CD4-positive, alpha-beta T cell (primary cell): ENCODE measurements at regions of chr4 and their contacts with region 1.

Region 1: GRCh38 chr4:153521999-153522801 is 56.0 kb downstream of the TMEM131L start:
- DNase-seq: peak in 13 of 14 experiments; percentile 33 to 85 (median 55)
- ATAC-seq: peak; percentile 56
- H3K4me3 ChIP-seq: peak overlapping the region; percentile 28
- H3K4me3 Mint-ChIP-seq: peak overlapping the region; percentile 85
- H3K27ac ChIP-seq: peak overlapping the region; percentile 66 to 81
- H3K27ac Mint-ChIP-seq: peak overlapping the region; percentile 91
- H3K4me1 ChIP-seq: peaks cover 93% of the 10 kb centered on the region
- H3K4me1 Mint-ChIP-seq: peaks cover 94% of the 10 kb centered on the region
- H3K27me3 ChIP-seq: no peaks in the 10 kb centered on the region
- H3K27me3 Mint-ChIP-seq: no peaks in the 10 kb centered on the region
- CTCF ChIP-seq: no peak

Region 2: DNA sequence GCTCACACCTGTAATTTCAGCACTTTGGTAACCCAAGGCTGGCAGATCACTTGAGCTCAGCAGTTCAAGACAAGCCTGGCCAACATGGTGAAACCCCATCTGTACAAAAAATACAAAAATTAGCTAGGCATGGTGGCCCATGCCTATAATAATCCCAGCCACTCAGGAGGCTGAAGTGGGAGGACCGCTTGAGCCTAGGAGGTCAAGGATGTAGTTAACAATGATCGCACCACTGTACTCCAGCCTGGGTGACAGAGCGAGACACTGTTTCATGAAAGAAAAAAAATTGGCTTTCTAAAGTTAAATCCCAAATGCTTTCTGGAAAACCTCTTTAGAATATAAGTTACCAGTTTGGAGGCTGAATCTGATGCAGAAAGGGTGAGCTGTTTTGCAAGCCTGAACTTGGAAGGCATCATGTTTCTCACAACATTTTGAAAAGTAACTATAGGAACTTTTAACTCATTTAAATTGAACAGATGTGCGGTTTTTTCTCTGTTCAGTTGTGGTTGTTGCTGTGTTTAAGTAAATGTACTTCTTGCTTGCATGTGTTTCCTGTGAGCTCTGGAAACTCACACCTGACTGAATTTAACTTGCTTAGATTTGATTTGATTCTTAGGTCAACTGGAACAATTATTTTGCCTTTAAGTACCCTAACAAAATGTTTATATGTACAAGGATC is 95.9 kb before region 1 on chr4:
- CTCF ChIA-PET with region 1: no interaction called
- POLR2A ChIA-PET with region 1: interaction called, 4 read pairs
- intact Hi-C with region 1: loop called in 1 of 2 experiments (anchors 5 kb)
- DNase-seq: peak in 5 of 14 experiments; percentile 10 to 74 (median 68)
- ATAC-seq: peak; percentile 73
- H3K4me3 ChIP-seq: no peak overlapping the region
- H3K4me3 Mint-ChIP-seq: peak overlapping the region; percentile 50
- H3K27ac ChIP-seq: peak overlapping the region; percentile 58 to 61
- H3K27ac Mint-ChIP-seq: peak overlapping the region; percentile 96
- H3K4me1 ChIP-seq: peaks cover 44% of the 10 kb centered on the region
- H3K4me1 Mint-ChIP-seq: peaks cover 57% of the 10 kb centered on the region
- H3K27me3 ChIP-seq: no peaks in the 10 kb centered on the region
- H3K27me3 Mint-ChIP-seq: no peaks in the 10 kb centered on the region
- CTCF ChIP-seq: no peak

Region 3: GRCh38 chr4:153488006-153488891 is 34.0 kb before region 1 on chr4:
- CTCF ChIA-PET with region 1: interaction called, 4 read pairs
- POLR2A ChIA-PET with region 1: interaction called, 12 read pairs
- intact Hi-C with region 1: loop called (anchors 5 kb)
- DNase-seq: peak in 13 of 14 experiments; percentile 50 to 94 (median 67)
- ATAC-seq: peak; percentile 65
- H3K4me3 ChIP-seq: peak overlapping the region; percentile 57
- H3K4me3 Mint-ChIP-seq: peak overlapping the region; percentile 88
- H3K27ac ChIP-seq: peak overlapping the region; percentile 92 to 94
- H3K27ac Mint-ChIP-seq: peak overlapping the region; percentile 92
- H3K4me1 ChIP-seq: peaks cover 68% of the 10 kb centered on the region
- H3K4me1 Mint-ChIP-seq: peaks cover 82% of the 10 kb centered on the region
- H3K27me3 ChIP-seq: no peaks in the 10 kb centered on the region
- H3K27me3 Mint-ChIP-seq: no peaks in the 10 kb centered on the region
- CTCF ChIP-seq: no peak

Region 4: GRCh38 chr4:153535772-153536513 is 13.7 kb after region 1 on chr4:
- CTCF ChIA-PET with region 1: interaction called, 8 read pairs
- POLR2A ChIA-PET with region 1: interaction called, 23 read pairs
- intact Hi-C with region 1: no loop called
- DNase-seq: peak in 3 of 14 experiments; percentile 33 to 51 (median 45)
- ATAC-seq: peak; percentile 62
- H3K4me3 ChIP-seq: no peak overlapping the region
- H3K4me3 Mint-ChIP-seq: peak overlapping the region; percentile 82
- H3K27ac ChIP-seq: peak overlapping the region; percentile 52 to 64
- H3K27ac Mint-ChIP-seq: peak overlapping the region; percentile 91
- H3K4me1 ChIP-seq: peaks cover 68% of the 10 kb centered on the region
- H3K4me1 Mint-ChIP-seq: peaks cover 94% of the 10 kb centered on the region
- H3K27me3 ChIP-seq: no peaks in the 10 kb centered on the region
- H3K27me3 Mint-ChIP-seq: no peaks in the 10 kb centered on the region
- CTCF ChIP-seq: no peak

Region 5: DNA sequence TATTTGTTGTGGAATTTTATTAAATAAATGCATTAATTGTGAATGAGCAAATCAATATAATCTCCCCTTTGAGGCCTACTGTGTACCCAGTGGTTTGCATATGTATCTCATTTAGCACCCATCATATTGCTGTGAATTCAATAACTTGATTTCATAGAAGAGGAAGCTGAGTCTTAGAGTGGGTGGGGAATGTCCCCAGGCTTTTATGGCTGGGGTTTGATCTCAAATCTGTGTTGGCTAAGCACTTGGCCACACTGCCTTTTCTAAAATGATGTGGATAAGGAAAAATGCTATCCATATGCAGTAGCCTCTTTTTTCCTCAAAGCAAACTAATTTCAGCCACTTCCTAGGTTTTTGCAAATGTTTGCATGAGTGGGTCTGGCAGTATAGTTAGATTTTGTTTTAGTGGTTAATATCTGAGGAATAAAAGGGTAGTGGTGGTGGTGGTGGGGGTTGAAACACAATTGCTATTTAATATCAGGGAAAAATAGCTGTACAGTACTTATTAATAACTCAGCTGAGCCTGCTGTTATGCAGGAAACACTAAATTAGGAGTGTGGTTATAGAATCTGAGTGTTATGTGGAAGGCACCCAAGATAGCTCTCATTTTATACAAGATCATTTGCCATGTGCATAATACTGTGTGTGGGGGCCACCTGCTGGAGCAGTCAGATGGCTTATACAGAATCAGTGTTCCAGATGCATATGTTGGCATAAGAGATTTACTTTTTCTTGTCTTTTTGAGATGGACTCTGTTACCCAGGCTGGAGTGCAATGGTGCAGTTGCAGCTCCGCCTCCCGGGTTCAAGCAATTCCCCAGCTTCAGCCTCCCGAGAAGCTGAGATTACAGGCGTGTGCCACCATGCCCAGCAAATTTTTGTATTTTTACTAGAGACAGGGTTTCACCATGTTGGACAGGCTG is 51.9 kb after region 1 on chr4:
- CTCF ChIA-PET with region 1: interaction called, 5 read pairs
- POLR2A ChIA-PET with region 1: interaction called, 14 read pairs
- intact Hi-C with region 1: loop called (anchors 5 kb)
- DNase-seq: peak; percentile 47 to 83 (median 65)
- ATAC-seq: peak; percentile 97
- H3K4me3 ChIP-seq: no peak overlapping the region
- H3K4me3 Mint-ChIP-seq: peak overlapping the region; percentile 25
- H3K27ac ChIP-seq: peak overlapping the region; percentile 1 to 32
- H3K27ac Mint-ChIP-seq: peak overlapping the region; percentile 57
- H3K4me1 ChIP-seq: peaks cover 37% of the 10 kb centered on the region
- H3K4me1 Mint-ChIP-seq: peaks cover 85% of the 10 kb centered on the region
- H3K27me3 ChIP-seq: no peaks in the 10 kb centered on the region
- H3K27me3 Mint-ChIP-seq: no peaks in the 10 kb centered on the region
- CTCF ChIP-seq: peak; percentile 78